ENCODE measurements at regions of chr2 and their contacts with region 1.

Region 1: GRCh38 chr2:88600038-88600465 is 27.2 kb downstream of the EIF2AK3 start:
- DNase-seq: peak in 7 of 9 donors; percentile 9 to 81 (median 28)
- ATAC-seq: peak; percentile 96
- H3K4me3 ChIP-seq: no peak overlapping the region
- H3K4me3 Mint-ChIP-seq: peak overlapping the region in 1 of 10 donors; percentile 40
- H3K27ac ChIP-seq: no peak overlapping the region
- H3K27ac Mint-ChIP-seq: peak overlapping the region in 7 of 9 donors; percentile 6 to 81 (median 31)
- H3K4me1 ChIP-seq: peaks cover 0 to 5% of the 10 kb centered on the region in 2 donors
- H3K4me1 Mint-ChIP-seq: peaks cover 26 to 63% (median 53%) of the 10 kb centered on the region in 7 donors
- H3K27me3 ChIP-seq: no peaks in the 10 kb centered on the region
- H3K27me3 Mint-ChIP-seq: no peaks in the 10 kb centered on the region

Region 2: DNA sequence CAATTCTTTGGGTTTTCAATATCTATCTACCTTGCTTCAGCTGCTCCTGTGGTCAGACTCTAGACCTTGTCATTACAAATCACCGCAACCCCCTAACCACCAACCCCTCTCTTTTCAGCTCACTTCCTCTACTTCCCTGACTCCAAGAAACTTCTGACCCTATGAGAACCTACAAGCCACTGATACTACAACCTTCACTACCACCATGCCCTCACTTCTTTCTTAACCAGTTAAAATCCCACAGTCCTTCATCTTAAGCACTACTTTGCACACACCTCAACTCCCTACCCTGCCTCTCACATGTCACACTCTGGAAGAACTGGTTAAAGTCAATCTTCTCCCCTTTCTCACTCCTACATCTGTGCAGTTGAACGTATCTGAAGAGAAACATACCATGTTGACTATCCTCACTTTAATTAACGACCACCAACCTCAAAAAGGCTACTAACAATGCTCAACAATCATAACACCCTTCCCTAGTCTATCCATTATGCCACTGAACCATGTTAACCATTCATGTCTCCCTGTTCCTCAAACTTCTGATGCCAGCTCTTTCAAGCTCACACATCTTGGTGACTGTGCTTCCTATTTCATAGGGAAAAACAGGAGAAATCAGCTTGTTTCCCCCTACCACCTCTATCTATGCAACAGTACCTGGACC is 14.6 kb after region 1 on chr2:
- CTCF ChIA-PET with region 1: no interaction called
- POLR2A ChIA-PET with region 1: no interaction called
- intact Hi-C with region 1: loop called in 1 of 2 experiments (anchors 2 kb)
- DNase-seq: no peak
- ATAC-seq: peak; percentile 10
- H3K4me3 ChIP-seq: no peak overlapping the region
- H3K4me3 Mint-ChIP-seq: no peak overlapping the region
- H3K27ac ChIP-seq: no peak overlapping the region
- H3K27ac Mint-ChIP-seq: no peak overlapping the region
- H3K4me1 ChIP-seq: no peaks in the 10 kb centered on the region
- H3K4me1 Mint-ChIP-seq: peaks cover 8 to 40% (median 27%) of the 10 kb centered on the region in 7 donors
- H3K27me3 ChIP-seq: no peaks in the 10 kb centered on the region
- H3K27me3 Mint-ChIP-seq: no peaks in the 10 kb centered on the region

Measured in naive thymus-derived CD4-positive, alpha-beta T cell (primary cell).